ENCODE measurements at regions of chr5 and their contacts with region 1.

Region 1: DNA sequence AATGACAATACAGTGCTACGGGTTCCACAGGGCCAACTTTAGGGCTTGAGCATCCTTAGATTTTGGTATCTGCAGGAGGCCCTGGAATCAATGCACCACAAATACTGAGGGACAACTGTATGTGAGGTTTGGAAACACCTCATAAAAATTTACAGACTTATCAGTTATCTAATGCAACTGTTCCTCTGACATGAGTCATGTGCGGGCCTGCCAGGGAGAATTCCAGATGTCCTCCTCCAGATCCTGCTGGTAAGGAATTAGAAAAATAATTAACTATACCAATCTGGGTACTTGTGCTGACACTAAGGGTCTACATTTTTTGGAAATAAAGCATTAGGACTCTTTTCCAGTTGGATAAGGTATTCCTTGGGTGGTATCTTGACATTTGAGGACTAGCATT is 333.3 kb downstream of the ARRDC3 start:
- DNase-seq: no peak
- ATAC-seq: no peak
- H3K4me3 ChIP-seq: no peak overlapping the region
- H3K27ac ChIP-seq: no peak overlapping the region
- H3K4me1 ChIP-seq: no peaks in the 10 kb centered on the region
- H3K27me3 ChIP-seq: no peaks in the 10 kb centered on the region
- CTCF ChIP-seq: no peak
- POLR2A ChIP-seq: no peak

Region 2: GRCh38 chr5:91024727-91025126 is 25.1 kb before region 1 on chr5:
- in situ Hi-C with region 1: no loop called
- intact Hi-C with region 1: loop called (anchors 1 kb)
- DNase-seq: no peak
- ATAC-seq: peak in 1 of 2 donors; percentile 29
- H3K4me3 ChIP-seq: no peak overlapping the region
- H3K27ac ChIP-seq: peak overlapping the region in 1 of 4 donors; percentile 5
- H3K4me1 ChIP-seq: peaks cover 29 to 37% of the 10 kb centered on the region in 2 donors
- H3K27me3 ChIP-seq: no peaks in the 10 kb centered on the region
- CTCF ChIP-seq: no peak
- POLR2A ChIP-seq: no peak